Activated CD8-positive, alpha-beta T cell treated with anti-CD3 and anti-CD28 coated beads, Interleukin-2, amount 10 ng/mL, durations not matched to agents 7 days and 5 days (primary cell): ENCODE measurements at regions of chr3 and their contacts with region 1.

Region 1: GRCh38 chr3:98022978-98023820 is 11.9 kb downstream of the GABRR3 start:
- DNase-seq: peak; percentile 93
- ATAC-seq: peak; percentile 84
- H3K4me3 Mint-ChIP-seq: no peak overlapping the region
- H3K27ac Mint-ChIP-seq: no peak overlapping the region
- H3K4me1 Mint-ChIP-seq: peaks cover 7% of the 10 kb centered on the region
- H3K27me3 Mint-ChIP-seq: peaks cover 10% of the 10 kb centered on the region

Region 2: GRCh38 chr3:97793420-97794019 is 229.7 kb before region 1 on chr3:
- CTCF ChIA-PET with region 1: interaction called, 68 read pairs
- POLR2A ChIA-PET with region 1: no interaction called
- DNase-seq: peak; percentile 38
- ATAC-seq: peak; percentile 60
- H3K4me3 Mint-ChIP-seq: no peak overlapping the region
- H3K27ac Mint-ChIP-seq: no peak overlapping the region
- H3K4me1 Mint-ChIP-seq: peaks cover 3% of the 10 kb centered on the region
- H3K27me3 Mint-ChIP-seq: no peaks in the 10 kb centered on the region

Region 3: DNA sequence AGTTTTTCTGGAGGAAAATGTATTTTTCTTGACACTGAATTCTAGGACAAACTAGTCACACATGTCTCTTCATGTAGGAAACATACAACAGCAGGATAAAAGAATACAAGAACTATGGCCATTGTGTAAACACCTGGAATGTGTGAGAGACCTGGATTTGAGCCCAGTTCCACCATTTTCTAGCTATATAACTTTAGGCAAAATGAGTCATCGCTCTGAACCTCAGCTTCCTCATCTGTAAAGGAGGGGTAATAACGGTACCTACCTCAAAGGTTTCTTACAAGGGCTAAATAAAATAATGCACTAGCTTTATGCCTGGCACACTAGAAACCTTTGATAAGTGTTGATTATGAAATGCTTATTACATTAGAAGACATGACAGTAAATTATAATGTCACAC is 108.8 kb before region 1 on chr3:
- CTCF ChIA-PET with region 1: no interaction called
- POLR2A ChIA-PET with region 1: no interaction called
- DNase-seq: no peak
- ATAC-seq: no peak
- H3K4me3 Mint-ChIP-seq: no peak overlapping the region
- H3K27ac Mint-ChIP-seq: no peak overlapping the region
- H3K4me1 Mint-ChIP-seq: peaks cover 33% of the 10 kb centered on the region
- H3K27me3 Mint-ChIP-seq: no peaks in the 10 kb centered on the region

Region 4: GRCh38 chr3:97971677-97972567 is 51.3 kb before region 1 on chr3 and contains the start of gene RIOX2:
- CTCF ChIA-PET with region 1: interaction called, 27 read pairs
- POLR2A ChIA-PET with region 1: no interaction called
- DNase-seq: peak; percentile 86
- ATAC-seq: peak; percentile 92
- H3K4me3 Mint-ChIP-seq: peak within 1 kb of the TSS; percentile 84
- H3K27ac Mint-ChIP-seq: peak within 1 kb of the TSS; percentile 90
- H3K4me1 Mint-ChIP-seq: peaks cover 74% of the 10 kb centered on the region
- H3K27me3 Mint-ChIP-seq: no peaks in the 10 kb centered on the region
- total RNA-seq, gene RIOX2: 25.0 to 27.9 TPM

Region 5: DNA sequence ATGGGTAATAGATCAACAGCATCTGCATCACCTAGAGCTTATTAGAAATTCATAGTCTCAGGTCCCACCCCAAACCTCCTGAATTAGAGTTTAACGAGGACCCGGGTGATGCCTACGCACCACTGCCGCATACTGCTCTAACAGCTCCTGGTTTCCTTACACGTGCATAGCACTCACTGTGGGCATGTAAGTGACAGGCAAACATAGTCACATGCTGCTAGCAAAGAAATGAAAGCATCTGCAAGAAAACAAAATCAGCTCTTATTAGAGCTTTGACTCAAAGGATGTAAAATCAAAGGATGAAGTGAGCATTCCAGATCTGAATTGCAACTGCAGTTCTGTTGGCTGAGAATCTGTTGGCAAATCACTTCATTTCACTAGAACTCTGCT is 31.9 kb before region 1 on chr3:
- CTCF ChIA-PET with region 1: interaction called, 18 read pairs
- POLR2A ChIA-PET with region 1: no interaction called
- DNase-seq: no peak
- ATAC-seq: peak; percentile 55
- H3K4me3 Mint-ChIP-seq: peak overlapping the region; percentile 13
- H3K27ac Mint-ChIP-seq: no peak overlapping the region
- H3K4me1 Mint-ChIP-seq: peaks cover 22% of the 10 kb centered on the region
- H3K27me3 Mint-ChIP-seq: peaks cover 12% of the 10 kb centered on the region

Region 6: DNA sequence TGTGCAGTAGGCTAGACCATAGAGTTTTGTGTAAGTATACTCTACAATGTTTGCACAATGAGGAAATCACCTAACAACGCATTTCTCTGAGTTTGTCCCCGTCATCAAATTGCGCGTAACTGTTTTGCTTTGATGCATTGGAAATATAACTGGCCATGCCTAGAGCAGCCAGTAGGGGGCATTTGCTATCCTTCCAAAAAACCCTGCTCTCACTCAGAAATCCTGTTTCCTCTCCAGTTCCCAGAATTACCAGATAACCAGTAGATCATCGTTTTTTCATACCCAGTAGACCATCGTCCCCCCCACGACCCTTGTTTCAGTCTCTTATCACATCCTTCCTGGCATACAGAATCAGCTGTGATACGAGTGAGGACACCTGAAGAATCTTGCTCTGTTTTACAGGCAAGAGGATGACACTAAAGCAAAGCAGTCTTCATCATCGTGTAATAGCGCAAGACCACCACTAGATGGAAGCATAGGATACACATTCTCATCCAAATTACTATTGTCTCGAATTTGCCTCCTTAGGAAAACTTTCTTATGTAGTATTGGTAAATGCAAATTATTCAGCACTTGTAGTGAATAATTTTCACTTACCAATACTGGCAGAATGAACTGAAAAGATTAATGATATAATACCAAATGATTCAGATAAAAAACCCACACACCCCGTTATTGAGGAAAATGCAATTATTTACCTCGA is 16.3 kb after region 1 on chr3:
- CTCF ChIA-PET with region 1: interaction called, 40 read pairs
- POLR2A ChIA-PET with region 1: no interaction called
- DNase-seq: peak; percentile 85
- ATAC-seq: peak; percentile 98
- H3K4me3 Mint-ChIP-seq: peak overlapping the region; percentile 73
- H3K27ac Mint-ChIP-seq: peak overlapping the region; percentile 79
- H3K4me1 Mint-ChIP-seq: peaks cover 9% of the 10 kb centered on the region
- H3K27me3 Mint-ChIP-seq: peaks cover 34% of the 10 kb centered on the region

Region 7: GRCh38 chr3:98171066-98171465 is 147.9 kb after region 1 on chr3:
- CTCF ChIA-PET with region 1: no interaction called
- POLR2A ChIA-PET with region 1: no interaction called
- DNase-seq: no peak
- ATAC-seq: no peak
- H3K4me3 Mint-ChIP-seq: no peak overlapping the region
- H3K27ac Mint-ChIP-seq: no peak overlapping the region
- H3K4me1 Mint-ChIP-seq: no peaks in the 10 kb centered on the region
- H3K27me3 Mint-ChIP-seq: no peaks in the 10 kb centered on the region

Region 8: GRCh38 chr3:98188545-98188944 is 165.3 kb after region 1 on chr3:
- CTCF ChIA-PET with region 1: no interaction called
- POLR2A ChIA-PET with region 1: no interaction called
- DNase-seq: no peak
- ATAC-seq: peak; percentile 53
- H3K4me3 Mint-ChIP-seq: no peak overlapping the region
- H3K27ac Mint-ChIP-seq: no peak overlapping the region
- H3K4me1 Mint-ChIP-seq: peaks cover 3% of the 10 kb centered on the region
- H3K27me3 Mint-ChIP-seq: peaks cover 13% of the 10 kb centered on the region